Calu3 (cell line): ENCODE measurements at regions of chr6 and their contacts with region 1.

Region 1: DNA sequence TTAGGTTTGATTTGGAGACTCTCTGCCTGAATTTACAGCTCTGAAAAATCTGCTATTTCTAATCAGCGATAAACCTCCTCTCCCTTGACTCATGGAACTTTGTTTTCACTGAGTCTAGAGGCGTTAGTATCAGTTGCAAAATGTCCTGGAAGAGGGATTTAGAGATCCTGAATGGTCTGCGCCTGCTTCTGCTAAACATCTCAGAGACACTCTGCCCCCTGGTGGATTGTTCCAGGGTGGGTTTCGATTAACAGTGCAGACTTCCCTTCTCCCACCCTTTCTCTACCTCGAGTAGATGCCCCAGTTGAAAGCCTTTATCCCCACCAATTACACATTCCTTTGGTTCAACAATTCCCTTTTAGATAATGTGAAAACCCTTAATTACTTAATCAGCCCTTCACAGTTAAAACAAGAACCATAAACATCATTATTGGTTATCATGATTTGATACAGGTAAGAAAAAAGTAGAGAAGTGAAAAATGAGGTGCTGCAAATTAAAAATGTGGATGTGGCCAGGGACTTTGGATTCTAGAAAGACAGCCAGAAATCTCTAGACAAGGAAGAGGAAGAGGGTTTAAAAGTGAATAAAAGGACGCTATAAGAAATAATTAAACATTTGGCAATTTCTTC is 5.5 kb downstream of the HTR1B start:
- DNase-seq: peak; percentile 83
- H3K4me3 Mint-ChIP-seq: no peak overlapping the region
- H3K27ac Mint-ChIP-seq: no peak overlapping the region
- H3K4me1 Mint-ChIP-seq: peaks cover 8% of the 10 kb centered on the region
- H3K27me3 Mint-ChIP-seq: peaks cover 14% of the 10 kb centered on the region
- CTCF ChIP-seq: peak; percentile 51

Region 2: GRCh38 chr6:75934643-75935472 is 1523.0 kb before region 1 on chr6:
- CTCF ChIA-PET with region 1: no interaction called
- intact Hi-C with region 1: loop called (anchors 1 kb)
- DNase-seq: peak; percentile 53
- H3K4me3 Mint-ChIP-seq: peak overlapping the region; percentile 1
- H3K27ac Mint-ChIP-seq: no peak overlapping the region
- H3K4me1 Mint-ChIP-seq: peaks cover 8% of the 10 kb centered on the region
- H3K27me3 Mint-ChIP-seq: no peaks in the 10 kb centered on the region
- CTCF ChIP-seq: peak; percentile 86

Region 3: DNA sequence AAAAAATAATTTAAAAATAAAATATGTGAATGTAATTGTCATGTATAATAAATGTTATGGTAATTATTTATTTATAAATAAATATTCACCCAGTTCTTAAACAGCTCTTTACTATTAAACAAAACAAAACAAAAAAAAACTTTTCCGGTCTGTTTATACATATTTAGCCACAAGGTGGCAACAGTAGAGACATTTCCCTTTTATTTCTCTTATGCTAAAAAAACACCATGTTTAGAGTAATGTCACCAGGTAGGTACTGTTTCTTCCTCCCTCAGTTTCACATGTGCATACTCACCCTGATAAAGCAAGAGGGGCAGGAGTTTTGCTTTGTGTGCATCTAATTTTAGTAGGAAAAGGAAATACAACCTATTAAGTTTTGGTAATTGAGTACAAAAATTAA is 775.0 kb before region 1 on chr6:
- CTCF ChIA-PET with region 1: no interaction called
- intact Hi-C with region 1: loop called (anchors 5 kb)
- DNase-seq: no peak
- H3K4me3 Mint-ChIP-seq: no peak overlapping the region
- H3K27ac Mint-ChIP-seq: no peak overlapping the region
- H3K4me1 Mint-ChIP-seq: no peaks in the 10 kb centered on the region
- H3K27me3 Mint-ChIP-seq: no peaks in the 10 kb centered on the region
- CTCF ChIP-seq: peak; percentile 23

Region 4: DNA sequence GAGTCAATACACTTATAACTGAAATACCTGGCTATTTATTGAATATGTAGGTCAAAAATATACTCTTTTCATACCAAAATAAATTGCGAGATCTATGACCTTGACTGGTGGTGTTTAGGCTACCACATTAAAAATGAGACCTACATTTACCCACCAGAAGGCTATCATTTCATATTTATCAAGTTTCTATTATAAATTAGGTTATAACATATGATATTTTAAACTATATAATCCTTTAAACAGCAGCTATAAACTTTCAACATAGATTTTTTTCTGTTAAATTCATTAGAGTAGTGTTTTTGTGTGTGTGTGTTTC is 580.6 kb before region 1 on chr6:
- CTCF ChIA-PET with region 1: no interaction called
- intact Hi-C with region 1: loop called (anchors 5 kb)
- DNase-seq: no peak
- H3K4me3 Mint-ChIP-seq: peak overlapping the region; percentile 72
- H3K27ac Mint-ChIP-seq: no peak overlapping the region
- H3K4me1 Mint-ChIP-seq: no peaks in the 10 kb centered on the region
- H3K27me3 Mint-ChIP-seq: no peaks in the 10 kb centered on the region
- CTCF ChIP-seq: no peak

Region 5: DNA sequence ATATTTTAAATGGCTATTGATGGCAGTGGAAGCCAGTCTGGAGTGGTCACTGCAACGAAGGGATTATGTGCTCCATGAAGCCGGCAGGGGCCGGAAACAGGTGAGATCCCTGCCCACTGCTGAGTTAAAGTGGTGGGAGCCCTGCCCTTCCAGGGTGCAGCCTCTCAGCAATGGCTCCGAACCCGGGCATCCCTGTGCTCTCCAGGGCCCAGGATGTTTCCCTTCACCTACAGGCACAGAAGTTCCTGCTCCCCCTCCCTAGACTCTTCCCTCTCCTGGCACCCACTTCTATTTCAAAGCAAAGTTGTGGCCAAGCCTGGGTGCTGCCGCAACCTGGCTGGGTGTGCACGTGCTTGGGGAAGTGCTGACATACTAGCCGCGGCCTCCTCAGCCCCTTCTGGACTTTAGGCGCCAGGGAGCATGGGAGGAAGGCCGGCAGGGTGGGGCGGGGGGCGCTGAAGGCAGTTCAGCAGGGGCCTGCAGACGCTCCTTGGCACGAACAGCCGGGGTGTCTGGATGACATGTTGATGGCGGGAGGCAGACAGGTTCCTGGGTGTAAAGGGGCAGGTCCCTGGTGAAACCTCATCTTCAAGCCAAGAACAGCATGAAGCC is 446.8 kb before region 1 on chr6:
- CTCF ChIA-PET with region 1: no interaction called
- intact Hi-C with region 1: loop called (anchors 10 kb)
- DNase-seq: no peak
- H3K4me3 Mint-ChIP-seq: no peak overlapping the region
- H3K27ac Mint-ChIP-seq: no peak overlapping the region
- H3K4me1 Mint-ChIP-seq: no peaks in the 10 kb centered on the region
- H3K27me3 Mint-ChIP-seq: no peaks in the 10 kb centered on the region
- CTCF ChIP-seq: no peak

Region 6: GRCh38 chr6:77143659-77144447 is 314.0 kb before region 1 on chr6:
- CTCF ChIA-PET with region 1: no interaction called
- intact Hi-C with region 1: loop called (anchors 10 kb)
- DNase-seq: no peak
- H3K4me3 Mint-ChIP-seq: no peak overlapping the region
- H3K27ac Mint-ChIP-seq: no peak overlapping the region
- H3K4me1 Mint-ChIP-seq: no peaks in the 10 kb centered on the region
- H3K27me3 Mint-ChIP-seq: no peaks in the 10 kb centered on the region
- CTCF ChIP-seq: no peak

Region 7: GRCh38 chr6:77231438-77232305 is 226.2 kb before region 1 on chr6:
- CTCF ChIA-PET with region 1: no interaction called
- intact Hi-C with region 1: no loop called
- DNase-seq: no peak
- H3K4me3 Mint-ChIP-seq: no peak overlapping the region
- H3K27ac Mint-ChIP-seq: no peak overlapping the region
- H3K4me1 Mint-ChIP-seq: no peaks in the 10 kb centered on the region
- H3K27me3 Mint-ChIP-seq: no peaks in the 10 kb centered on the region
- CTCF ChIP-seq: no peak

Region 8: DNA sequence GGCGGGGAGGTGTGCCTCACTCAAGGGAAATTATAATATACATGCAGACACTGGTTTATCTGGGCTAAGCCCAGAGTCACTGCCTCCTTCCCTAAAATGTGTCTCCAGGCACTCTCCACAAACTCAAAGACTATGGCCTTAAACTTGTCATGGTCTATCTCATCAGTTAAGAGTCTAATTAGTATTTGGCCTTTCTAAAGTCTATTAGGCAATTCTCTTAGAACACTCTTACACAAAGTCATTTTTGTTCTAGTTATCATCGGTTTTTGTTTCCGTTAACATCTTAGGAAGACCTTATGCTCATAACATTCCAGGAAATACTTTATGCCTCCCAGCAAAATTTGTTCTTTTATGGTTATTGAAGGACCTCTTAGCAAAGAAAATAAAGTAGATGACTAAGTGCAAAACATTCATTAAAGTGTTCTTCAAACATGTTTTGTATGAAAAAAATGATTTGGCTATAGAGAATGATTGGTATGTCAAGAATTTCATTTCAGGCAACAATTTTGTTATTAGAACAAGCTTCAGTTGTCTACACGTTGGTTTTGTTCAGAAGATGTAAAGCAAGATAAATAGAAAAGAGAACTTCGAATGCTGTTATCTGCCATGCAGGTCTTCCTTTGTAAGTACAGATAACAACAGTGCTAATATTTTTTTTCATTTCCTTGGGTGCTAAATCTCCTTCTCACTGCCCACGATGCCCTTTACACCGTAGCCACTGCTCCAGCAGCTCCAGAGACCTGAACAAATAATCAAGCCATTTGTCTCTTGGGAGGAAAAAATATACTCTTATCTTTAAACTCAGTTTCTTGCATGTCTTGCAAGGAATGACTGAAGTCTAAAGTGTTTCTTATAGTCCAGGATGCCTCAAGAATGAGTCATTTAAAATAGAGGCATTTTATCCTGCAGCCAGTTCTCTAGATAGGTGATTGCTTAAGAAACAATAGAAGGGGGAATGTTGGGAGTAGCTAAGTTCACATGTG is 165.0 kb before region 1 on chr6:
- CTCF ChIA-PET with region 1: no interaction called
- intact Hi-C with region 1: loop called (anchors 2 kb)
- DNase-seq: no peak
- H3K4me3 Mint-ChIP-seq: peak overlapping the region; percentile 49
- H3K27ac Mint-ChIP-seq: peak overlapping the region; percentile 26
- H3K4me1 Mint-ChIP-seq: peaks cover 30% of the 10 kb centered on the region
- H3K27me3 Mint-ChIP-seq: no peaks in the 10 kb centered on the region
- CTCF ChIP-seq: no peak

Region 9: DNA sequence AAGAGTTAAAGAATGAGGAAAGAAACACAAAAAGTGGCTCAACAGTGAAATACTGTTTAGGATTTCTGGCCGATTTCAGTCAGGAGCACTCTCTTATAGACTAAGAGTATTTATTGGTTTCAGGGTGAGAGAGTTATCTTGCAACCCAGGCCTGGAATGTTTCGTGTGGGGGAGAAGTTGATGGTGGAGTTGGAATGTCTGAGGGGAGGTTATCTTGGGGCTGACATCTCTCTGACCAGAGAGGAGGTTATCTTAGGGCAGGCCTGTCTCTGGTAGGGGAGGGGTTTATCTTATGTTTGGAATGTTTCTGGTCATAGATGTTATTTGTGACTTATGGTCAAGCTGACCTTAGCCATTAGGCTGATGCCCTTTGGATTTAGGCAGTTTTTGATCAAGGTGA is 74.8 kb before region 1 on chr6:
- CTCF ChIA-PET with region 1: no interaction called
- intact Hi-C with region 1: no loop called
- DNase-seq: no peak
- H3K4me3 Mint-ChIP-seq: no peak overlapping the region
- H3K27ac Mint-ChIP-seq: no peak overlapping the region
- H3K4me1 Mint-ChIP-seq: no peaks in the 10 kb centered on the region
- H3K27me3 Mint-ChIP-seq: no peaks in the 10 kb centered on the region
- CTCF ChIP-seq: no peak